BJ (cell line): ENCODE measurements at regions of chr15 and their contacts with region 1.

Region 1: GRCh38 chr15:42084460-42085235 is 9.7 kb downstream of the PLA2G4D start:
- DNase-seq: no peak
- H3K4me3 ChIP-seq: no peak overlapping the region
- H3K27me3 ChIP-seq: peaks cover 37% of the 10 kb centered on the region
- CTCF ChIP-seq: peak; percentile 93

Region 2: GRCh38 chr15:41882689-41883483 is 201.8 kb before region 1 on chr15:
- CTCF ChIA-PET with region 1: no interaction called
- POLR2A ChIA-PET with region 1: no interaction called
- DNase-seq: no peak
- H3K4me3 ChIP-seq: no peak overlapping the region
- H3K27me3 ChIP-seq: peaks cover 5% of the 10 kb centered on the region
- CTCF ChIP-seq: no peak

Region 3: DNA sequence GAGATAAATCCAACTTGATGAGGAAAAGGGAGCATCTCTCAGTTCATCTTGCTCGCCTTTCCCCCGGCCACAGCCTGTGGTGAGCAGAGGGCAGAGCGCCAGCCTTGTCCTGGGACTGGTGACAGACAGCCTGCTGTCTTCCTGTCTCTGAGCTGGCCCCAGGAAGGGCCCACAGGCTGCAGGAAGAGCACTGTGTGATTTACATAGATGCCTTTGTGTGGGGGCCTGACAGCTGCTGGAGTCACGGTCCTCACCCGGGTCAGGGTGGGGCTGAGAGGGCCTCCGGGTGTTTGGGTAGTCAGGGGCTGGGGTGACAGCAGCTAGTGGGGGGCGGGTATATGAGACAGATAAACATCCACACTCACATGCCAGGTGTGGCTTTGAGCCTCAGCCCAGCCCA is 19.6 kb before region 1 on chr15:
- CTCF ChIA-PET with region 1: interaction called, 63 read pairs
- POLR2A ChIA-PET with region 1: no interaction called
- DNase-seq: no peak
- H3K4me3 ChIP-seq: no peak overlapping the region
- H3K27me3 ChIP-seq: peaks cover 18% of the 10 kb centered on the region
- CTCF ChIP-seq: no peak

Region 4: GRCh38 chr15:42107473-42107872 is 22.8 kb after region 1 on chr15:
- CTCF ChIA-PET with region 1: interaction called, 18 read pairs
- POLR2A ChIA-PET with region 1: no interaction called
- DNase-seq: no peak
- H3K4me3 ChIP-seq: no peak overlapping the region
- H3K27me3 ChIP-seq: peaks cover 14% of the 10 kb centered on the region
- CTCF ChIP-seq: no peak